Natural killer cell (primary cell): ENCODE measurements at regions of chr9 and their contacts with region 1.

Region 1: GRCh38 chr9:69549310-69550202 is 122.6 kb downstream of the APBA1 start:
- DNase-seq: peak in 1 of 2 donors; percentile 58
- ATAC-seq: peak in 1 of 3 donors; percentile 59
- H3K4me3 ChIP-seq: no peak overlapping the region
- H3K4me3 Mint-ChIP-seq: no peak overlapping the region
- H3K27ac ChIP-seq: no peak overlapping the region
- H3K27ac Mint-ChIP-seq: no peak overlapping the region
- H3K4me1 ChIP-seq: no peaks in the 10 kb centered on the region
- H3K4me1 Mint-ChIP-seq: no peaks in the 10 kb centered on the region
- H3K27me3 ChIP-seq: no peaks in the 10 kb centered on the region
- H3K27me3 Mint-ChIP-seq: peaks cover 7 to 43% of the 10 kb centered on the region in 2 donors
- CTCF ChIP-seq: peak; percentile 67

Region 2: GRCh38 chr9:69054989-69055388 is 494.6 kb before region 1 on chr9:
- intact Hi-C with region 1: loop called (anchors 5 kb)
- DNase-seq: no peak
- ATAC-seq: no peak
- H3K4me3 ChIP-seq: no peak overlapping the region
- H3K4me3 Mint-ChIP-seq: no peak overlapping the region
- H3K27ac ChIP-seq: no peak overlapping the region
- H3K27ac Mint-ChIP-seq: no peak overlapping the region
- H3K4me1 ChIP-seq: no peaks in the 10 kb centered on the region
- H3K4me1 Mint-ChIP-seq: peaks cover 12 to 18% of the 10 kb centered on the region in 2 donors
- H3K27me3 ChIP-seq: no peaks in the 10 kb centered on the region
- H3K27me3 Mint-ChIP-seq: no peaks in the 10 kb centered on the region
- CTCF ChIP-seq: no peak

Region 3: DNA sequence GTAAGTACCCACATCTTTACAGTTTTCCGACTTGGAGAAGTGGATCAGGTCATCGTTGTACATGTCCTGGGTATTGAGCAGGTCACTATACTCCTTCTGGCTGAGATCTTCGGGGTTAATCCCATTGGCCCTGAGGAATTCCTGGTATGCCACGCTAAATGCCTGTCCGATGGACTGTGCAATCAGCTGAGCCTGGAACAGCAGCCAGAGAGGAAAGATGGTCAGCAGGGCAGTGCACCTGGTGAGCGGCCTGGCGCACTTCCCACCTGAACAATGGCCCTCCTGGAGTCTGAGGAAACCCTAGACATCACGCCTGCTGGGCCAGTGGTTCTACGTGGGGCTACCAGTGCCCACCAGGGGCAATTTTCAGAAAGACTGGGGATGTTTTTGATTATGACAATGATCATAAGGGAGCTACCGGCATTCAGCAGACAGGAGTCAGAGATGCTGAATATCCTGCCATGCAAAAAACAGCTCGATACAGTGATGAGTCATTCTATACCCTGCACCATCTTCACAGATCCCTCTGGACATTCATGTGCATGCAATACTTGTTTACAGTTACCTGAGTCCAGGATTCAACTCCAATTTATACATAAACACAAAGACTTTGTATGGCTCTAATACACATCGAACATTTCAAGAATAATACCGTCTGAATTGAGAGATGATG is 97.3 kb before region 1 on chr9:
- intact Hi-C with region 1: loop called (anchors 10 kb)
- DNase-seq: no peak
- ATAC-seq: no peak
- H3K4me3 ChIP-seq: no peak overlapping the region
- H3K4me3 Mint-ChIP-seq: no peak overlapping the region
- H3K27ac ChIP-seq: no peak overlapping the region
- H3K27ac Mint-ChIP-seq: no peak overlapping the region
- H3K4me1 ChIP-seq: no peaks in the 10 kb centered on the region
- H3K4me1 Mint-ChIP-seq: no peaks in the 10 kb centered on the region
- H3K27me3 ChIP-seq: no peaks in the 10 kb centered on the region
- H3K27me3 Mint-ChIP-seq: peaks cover 0 to 3% of the 10 kb centered on the region in 2 donors
- CTCF ChIP-seq: no peak

Region 4: GRCh38 chr9:69496846-69497450 is 52.6 kb before region 1 on chr9:
- intact Hi-C with region 1: loop called (anchors 10 kb)
- DNase-seq: no peak
- ATAC-seq: no peak
- H3K4me3 ChIP-seq: no peak overlapping the region
- H3K4me3 Mint-ChIP-seq: no peak overlapping the region
- H3K27ac ChIP-seq: no peak overlapping the region
- H3K27ac Mint-ChIP-seq: no peak overlapping the region
- H3K4me1 ChIP-seq: no peaks in the 10 kb centered on the region
- H3K4me1 Mint-ChIP-seq: no peaks in the 10 kb centered on the region
- H3K27me3 ChIP-seq: no peaks in the 10 kb centered on the region
- H3K27me3 Mint-ChIP-seq: peaks cover 0 to 5% of the 10 kb centered on the region in 2 donors
- CTCF ChIP-seq: no peak

Region 5: DNA sequence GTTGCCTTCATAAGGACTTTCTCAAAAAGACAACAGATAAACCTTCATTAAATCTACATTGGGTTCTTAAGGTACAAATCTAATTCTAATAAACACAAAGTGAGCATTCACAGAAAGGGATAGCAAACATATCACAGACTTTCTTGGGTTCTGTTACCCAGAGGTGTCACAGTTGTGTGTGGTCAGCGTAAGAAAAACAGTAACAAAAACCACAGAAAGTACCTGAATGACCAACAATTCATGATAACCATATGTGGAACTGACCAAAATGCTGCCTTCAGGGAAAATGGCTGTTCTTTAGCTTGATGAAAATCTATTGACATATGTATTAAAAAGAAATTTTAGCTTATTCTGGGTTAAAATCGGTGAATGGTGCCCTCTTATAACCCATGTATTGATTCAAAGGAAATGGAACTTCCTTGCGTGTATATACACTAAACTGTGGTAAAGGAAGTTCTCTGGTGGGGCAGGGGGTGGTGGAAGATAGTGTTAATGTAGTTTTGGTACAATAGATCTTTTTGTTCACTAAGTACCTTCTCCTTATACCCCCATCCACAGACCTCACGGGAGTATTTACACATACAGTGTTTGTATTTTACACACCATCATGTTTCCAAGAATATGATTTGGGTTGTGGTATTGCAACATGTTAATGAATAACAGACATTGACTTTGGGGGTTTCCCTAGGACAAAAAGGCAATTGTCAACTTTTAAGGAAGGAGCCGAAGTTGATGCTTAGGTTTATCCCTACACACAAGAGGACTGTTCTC is 29.9 kb before region 1 on chr9:
- intact Hi-C with region 1: loop called (anchors 2 kb)
- DNase-seq: no peak
- ATAC-seq: peak in 1 of 3 donors; percentile 56
- H3K4me3 ChIP-seq: no peak overlapping the region
- H3K4me3 Mint-ChIP-seq: peak overlapping the region; percentile 2
- H3K27ac ChIP-seq: no peak overlapping the region
- H3K27ac Mint-ChIP-seq: no peak overlapping the region
- H3K4me1 ChIP-seq: peaks cover 4% of the 10 kb centered on the region
- H3K4me1 Mint-ChIP-seq: peaks cover 12 to 13% of the 10 kb centered on the region in 2 donors
- H3K27me3 ChIP-seq: peaks cover 2% of the 10 kb centered on the region
- H3K27me3 Mint-ChIP-seq: peaks cover 6 to 33% of the 10 kb centered on the region in 2 donors
- CTCF ChIP-seq: no peak